ENCODE measurements at regions of chr15 and their contacts with region 1.

Region 1: GRCh38 chr15:61871926-61872522 is 188.2 kb downstream of the VPS13C start:
- DNase-seq: no peak
- H3K4me3 Mint-ChIP-seq: no peak overlapping the region
- H3K27ac Mint-ChIP-seq: no peak overlapping the region
- H3K4me1 Mint-ChIP-seq: no peaks in the 10 kb centered on the region
- H3K27me3 Mint-ChIP-seq: no peaks in the 10 kb centered on the region

Region 2: DNA sequence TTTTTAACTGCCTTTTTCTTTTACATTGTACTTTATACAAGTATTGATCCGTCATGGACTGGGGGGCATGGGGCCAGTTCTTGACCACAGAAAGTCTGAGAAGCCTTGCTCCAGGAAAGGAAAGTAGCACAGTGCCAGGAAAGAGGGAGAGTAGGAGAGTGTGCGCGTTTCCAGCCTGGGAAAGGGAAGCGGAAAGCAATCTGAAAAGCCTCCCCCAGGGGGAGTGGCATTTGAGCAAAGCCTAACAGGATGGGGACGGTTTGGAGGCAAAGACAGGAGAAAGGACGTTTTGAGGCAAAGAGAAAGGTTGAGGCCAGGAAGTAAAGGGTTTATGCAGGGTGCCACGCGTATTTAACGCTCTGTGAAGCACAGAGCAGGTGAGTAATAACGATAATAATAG is 759.8 kb before region 1 on chr15:
- intact Hi-C with region 1: no loop called
- DNase-seq: no peak
- H3K4me3 Mint-ChIP-seq: no peak overlapping the region
- H3K27ac Mint-ChIP-seq: no peak overlapping the region
- H3K4me1 Mint-ChIP-seq: no peaks in the 10 kb centered on the region
- H3K27me3 Mint-ChIP-seq: peaks cover 19% of the 10 kb centered on the region

Region 3: DNA sequence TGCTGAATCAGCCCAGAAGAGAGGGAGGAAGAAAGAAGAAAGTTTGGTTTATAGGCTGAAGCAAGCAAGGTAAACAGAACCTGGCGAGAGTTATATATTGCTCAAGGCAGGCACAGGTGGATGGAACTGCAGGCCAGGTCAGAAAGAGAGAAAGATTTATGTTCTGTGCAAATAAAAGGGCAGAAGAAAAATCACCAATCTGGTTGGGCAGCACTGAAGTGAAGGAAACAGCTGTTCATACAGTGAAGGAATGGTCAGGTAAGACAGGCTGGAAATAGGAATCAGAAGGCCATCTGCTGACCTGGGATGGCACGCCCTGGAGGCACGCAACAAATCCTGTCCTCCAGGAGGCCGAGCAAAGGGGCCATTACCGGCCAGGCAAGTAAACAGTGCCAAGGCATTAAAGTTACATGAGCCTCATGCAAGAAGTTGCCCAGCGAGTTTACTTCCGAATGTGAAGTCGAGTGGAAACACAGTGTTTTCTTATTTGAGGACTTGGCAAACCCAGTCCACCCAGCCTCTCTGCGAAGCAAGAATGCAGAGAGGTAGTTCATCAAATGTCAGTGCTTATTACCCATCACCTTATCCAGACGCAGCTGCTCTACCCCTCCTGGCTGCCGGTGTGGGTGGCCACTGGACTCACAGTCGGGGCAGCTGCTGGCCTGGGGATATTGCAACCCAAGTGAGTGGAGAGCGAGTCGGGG is 121.5 kb before region 1 on chr15:
- intact Hi-C with region 1: no loop called
- DNase-seq: no peak
- H3K4me3 Mint-ChIP-seq: no peak overlapping the region
- H3K27ac Mint-ChIP-seq: no peak overlapping the region
- H3K4me1 Mint-ChIP-seq: no peaks in the 10 kb centered on the region
- H3K27me3 Mint-ChIP-seq: peaks cover 2% of the 10 kb centered on the region

Region 4: GRCh38 chr15:62254137-62254934 is 382.3 kb after region 1 on chr15:
- intact Hi-C with region 1: loop called (anchors 1 kb)
- DNase-seq: peak; percentile 38
- H3K4me3 Mint-ChIP-seq: no peak overlapping the region
- H3K27ac Mint-ChIP-seq: no peak overlapping the region
- H3K4me1 Mint-ChIP-seq: no peaks in the 10 kb centered on the region
- H3K27me3 Mint-ChIP-seq: no peaks in the 10 kb centered on the region

Region 5: GRCh38 chr15:62306851-62307504 is 435.0 kb after region 1 on chr15:
- intact Hi-C with region 1: loop called (anchors 2 kb)
- DNase-seq: no peak
- H3K4me3 Mint-ChIP-seq: no peak overlapping the region
- H3K27ac Mint-ChIP-seq: no peak overlapping the region
- H3K4me1 Mint-ChIP-seq: peaks cover 7% of the 10 kb centered on the region
- H3K27me3 Mint-ChIP-seq: peaks cover 36% of the 10 kb centered on the region

Region 6: GRCh38 chr15:62344806-62345539 is 472.9 kb after region 1 on chr15:
- intact Hi-C with region 1: loop called (anchors 5 kb)
- DNase-seq: peak; percentile 24
- H3K4me3 Mint-ChIP-seq: peak overlapping the region; percentile 73
- H3K27ac Mint-ChIP-seq: no peak overlapping the region
- H3K4me1 Mint-ChIP-seq: peaks cover 7% of the 10 kb centered on the region
- H3K27me3 Mint-ChIP-seq: no peaks in the 10 kb centered on the region

Measured in activated T-helper 1 cell treated with anti-CD3 and anti-CD28 coated beads, Interleukin-12 subunit alpha, Interleukin-12 subunit beta, Interleukin-2, Interleukin-4 antibody, amounts not matched to agents 30 ng/mL and 10 ng/mL and 1 ng/mL, durations not matched to agents 14 hours and 24 hours and 36 hours (primary cell).